Spleen (tissue), 13 donors: ENCODE measurements at regions of chr7 and their contacts with region 1.

Region 1: GRCh38 chr7:8189625-8190024 is 72.3 kb downstream of the ICA1 start:
- DNase-seq: no peak
- H3K4me3 ChIP-seq: no peak overlapping the region
- H3K27ac ChIP-seq: no peak overlapping the region
- H3K4me1 ChIP-seq: peaks cover 0 to 35% (median 22%) of the 10 kb centered on the region in 6 donors
- H3K27me3 ChIP-seq: no peaks in the 10 kb centered on the region
- CTCF ChIP-seq: no peak
- POLR2A ChIP-seq: no peak

Region 2: DNA sequence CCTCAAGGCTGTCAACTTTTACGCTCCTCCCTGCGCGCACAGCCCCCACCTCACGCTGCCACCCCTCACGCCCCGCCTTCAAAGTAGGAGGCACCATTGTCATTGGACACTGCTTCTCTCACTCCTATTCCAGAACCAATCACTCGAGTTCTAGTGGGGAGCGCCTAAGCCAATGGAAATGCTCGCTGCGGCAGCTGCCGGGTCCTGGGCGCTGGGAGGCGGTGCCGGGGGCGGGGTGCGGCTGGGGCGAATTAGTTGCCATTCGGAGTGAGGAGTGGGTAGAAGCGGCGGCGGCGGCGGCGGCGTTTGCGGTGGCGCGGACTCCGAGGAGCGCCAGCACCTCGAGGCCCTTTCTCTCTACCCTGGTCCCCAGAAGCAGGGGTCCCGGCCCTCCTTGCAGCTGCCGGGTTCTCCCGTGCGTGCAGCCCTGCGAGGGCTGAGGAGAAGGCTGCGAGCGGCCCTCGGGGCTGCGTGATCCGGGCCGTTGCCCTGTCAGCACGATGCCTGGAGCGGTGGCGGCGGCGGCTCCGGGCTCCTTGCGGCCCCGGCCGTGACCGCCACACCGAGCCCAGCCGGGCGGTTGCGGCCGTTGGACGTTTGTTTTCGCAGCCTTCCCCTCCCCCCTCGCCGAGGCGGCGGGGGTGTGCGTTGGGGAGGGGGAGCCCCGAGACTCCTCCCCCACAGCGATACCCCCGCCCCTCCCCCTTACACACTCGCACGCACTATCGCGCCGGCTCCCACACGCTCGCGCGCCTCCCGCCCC is 220.9 kb before region 1 on chr7 and contains the start of gene GLCCI1:
- intact Hi-C with region 1: loop called (anchors 10 kb)
- DNase-seq: peak; percentile 99
- H3K4me3 ChIP-seq: peak within 1 kb of the TSS; percentile 79 to 97 (median 90)
- H3K27ac ChIP-seq: peak within 1 kb of the TSS; percentile 94 to 99 (median 99)
- H3K4me1 ChIP-seq: peaks cover 0 to 61% (median 41%) of the 10 kb centered on the region in 6 donors
- H3K27me3 ChIP-seq: no peaks in the 10 kb centered on the region
- CTCF ChIP-seq: peak in 2 of 11 experiments; percentile 30 to 38
- POLR2A ChIP-seq: peak; percentile 63 to 93 (median 67)
- total RNA-seq, gene GLCCI1: 35.7 to 53.2 (median 44.8) TPM

Region 3: GRCh38 chr7:8343556-8343955 is 153.9 kb after region 1 on chr7:
- intact Hi-C with region 1: no loop called
- DNase-seq: no peak
- H3K4me3 ChIP-seq: no peak overlapping the region
- H3K27ac ChIP-seq: no peak overlapping the region
- H3K4me1 ChIP-seq: no peaks in the 10 kb centered on the region
- H3K27me3 ChIP-seq: peaks cover 0 to 5% (median 0%) of the 10 kb centered on the region in 7 donors
- CTCF ChIP-seq: no peak
- POLR2A ChIP-seq: no peak